Heart left ventricle (tissue), 16 donors: ENCODE measurements at regions of chr1 and their contacts with region 1.

Region 1: GRCh38 chr1:184036517-184036949 is 995 bp downstream of the COLGALT2 start:
- DNase-seq: peak; percentile 33 to 77 (median 45)
- ATAC-seq: peak; percentile 71 to 84 (median 80)
- H3K4me3 ChIP-seq: peak overlapping the region; percentile 55 to 91 (median 68)
- H3K27ac ChIP-seq: peak overlapping the region; percentile 44 to 90 (median 79)
- H3K4me1 ChIP-seq: peaks cover 0 to 18% (median 0%) of the 10 kb centered on the region in 12 donors
- H3K27me3 ChIP-seq: peaks cover 0 to 19% (median 0%) of the 10 kb centered on the region in 9 donors
- CTCF ChIP-seq: no peak
- POLR2A ChIP-seq: peak in 1 of 2 donors; percentile 25

Region 2: GRCh38 chr1:183932412-183932811 is 104.1 kb before region 1 on chr1:
- intact Hi-C with region 1: loop called in 5 of 10 experiments (anchors 5 to 10 kb)
- DNase-seq: peak; percentile 83 to 94 (median 91)
- ATAC-seq: peak; percentile 77 to 91 (median 88)
- H3K4me3 ChIP-seq: peak overlapping the region in 4 of 12 donors; percentile 3 to 19 (median 12)
- H3K27ac ChIP-seq: peak overlapping the region in 9 of 12 donors; percentile 26 to 73 (median 57)
- H3K4me1 ChIP-seq: peaks cover 0 to 30% (median 11%) of the 10 kb centered on the region in 12 donors
- H3K27me3 ChIP-seq: no peaks in the 10 kb centered on the region
- CTCF ChIP-seq: no peak
- POLR2A ChIP-seq: no peak

Region 3: DNA sequence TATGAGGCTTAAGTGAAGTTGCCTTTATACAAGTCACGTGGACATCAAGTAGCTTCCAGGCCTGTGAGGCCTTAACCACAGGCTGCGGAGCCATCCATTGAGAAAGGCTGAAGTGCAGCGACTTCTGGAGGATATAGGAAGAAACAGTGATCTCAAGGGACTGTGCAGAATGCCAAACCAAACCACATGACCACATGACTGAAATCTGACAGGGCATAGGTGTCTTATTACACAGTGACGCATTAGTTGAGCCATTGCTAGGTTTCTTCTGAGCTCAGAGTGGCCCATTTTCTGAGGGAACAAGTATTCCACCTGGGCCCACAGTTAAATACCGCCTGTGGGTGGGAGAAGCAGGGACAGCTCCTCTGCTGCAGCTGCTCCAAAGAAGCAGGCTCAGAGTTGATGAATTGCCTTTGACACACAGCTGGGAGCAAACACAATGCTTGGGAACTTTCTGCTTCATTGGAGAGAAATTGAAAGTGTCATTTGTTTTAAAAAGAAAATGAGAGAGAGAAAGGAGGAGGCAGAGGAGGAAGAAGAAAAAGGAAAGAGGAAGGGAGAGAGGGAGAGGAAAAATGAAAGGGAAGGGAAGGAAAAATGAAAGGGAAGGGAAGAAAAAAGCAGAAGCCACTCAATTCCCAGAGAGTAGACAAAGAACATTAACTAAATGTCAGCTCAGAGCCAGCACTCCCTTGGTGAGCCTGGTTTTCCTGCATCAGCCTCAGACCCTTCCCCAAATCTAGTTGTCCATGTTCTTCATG is 93.4 kb before region 1 on chr1:
- intact Hi-C with region 1: loop called in 5 of 10 experiments (anchors 5 to 10 kb)
- DNase-seq: peak in 1 of 5 donors; percentile 43
- ATAC-seq: peak in 3 of 4 donors; percentile 63 to 70 (median 65)
- H3K4me3 ChIP-seq: no peak overlapping the region
- H3K27ac ChIP-seq: peak overlapping the region in 5 of 12 donors; percentile 9 to 49 (median 32)
- H3K4me1 ChIP-seq: peaks cover 0 to 22% (median 0%) of the 10 kb centered on the region in 12 donors
- H3K27me3 ChIP-seq: no peaks in the 10 kb centered on the region
- CTCF ChIP-seq: no peak
- POLR2A ChIP-seq: no peak

Region 4: GRCh38 chr1:183989078-183989577 is 47.4 kb before region 1 on chr1:
- intact Hi-C with region 1: loop called in 1 of 10 experiments (anchors 5 kb)
- DNase-seq: peak in 4 of 5 donors; percentile 39 to 63 (median 48)
- ATAC-seq: peak; percentile 49 to 87 (median 81)
- H3K4me3 ChIP-seq: no peak overlapping the region
- H3K27ac ChIP-seq: peak overlapping the region in 5 of 12 donors; percentile 0 to 61 (median 38)
- H3K4me1 ChIP-seq: peaks cover 0 to 49% (median 20%) of the 10 kb centered on the region in 12 donors
- H3K27me3 ChIP-seq: no peaks in the 10 kb centered on the region
- CTCF ChIP-seq: no peak
- POLR2A ChIP-seq: no peak

Region 5: DNA sequence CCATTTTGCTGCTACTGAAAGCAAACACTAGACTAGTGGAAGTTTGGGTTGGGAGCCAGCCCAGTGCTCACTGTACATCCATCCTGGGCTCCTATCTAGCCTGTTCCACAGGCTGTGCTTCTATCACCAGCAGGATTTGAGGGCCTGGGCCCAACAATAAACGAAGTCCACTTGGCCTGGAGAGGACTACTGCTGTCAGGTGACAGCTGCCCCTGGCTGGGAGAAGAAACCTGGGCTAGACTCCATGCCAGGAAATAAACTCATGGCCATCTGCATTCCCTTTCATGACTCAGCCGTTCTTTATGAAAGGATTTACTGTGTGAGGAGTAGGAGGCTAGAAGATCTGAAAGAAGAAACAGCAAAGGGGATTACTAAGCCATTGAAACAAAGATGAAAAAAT is 34.5 kb before region 1 on chr1:
- intact Hi-C with region 1: no loop called
- DNase-seq: peak in 4 of 5 donors; percentile 47 to 58 (median 49)
- ATAC-seq: peak; percentile 78 to 94 (median 87)
- H3K4me3 ChIP-seq: no peak overlapping the region
- H3K27ac ChIP-seq: peak overlapping the region in 9 of 12 donors; percentile 8 to 61 (median 29)
- H3K4me1 ChIP-seq: peaks cover 0 to 16% (median 8%) of the 10 kb centered on the region in 12 donors
- H3K27me3 ChIP-seq: no peaks in the 10 kb centered on the region
- CTCF ChIP-seq: no peak
- POLR2A ChIP-seq: no peak

Region 6: DNA sequence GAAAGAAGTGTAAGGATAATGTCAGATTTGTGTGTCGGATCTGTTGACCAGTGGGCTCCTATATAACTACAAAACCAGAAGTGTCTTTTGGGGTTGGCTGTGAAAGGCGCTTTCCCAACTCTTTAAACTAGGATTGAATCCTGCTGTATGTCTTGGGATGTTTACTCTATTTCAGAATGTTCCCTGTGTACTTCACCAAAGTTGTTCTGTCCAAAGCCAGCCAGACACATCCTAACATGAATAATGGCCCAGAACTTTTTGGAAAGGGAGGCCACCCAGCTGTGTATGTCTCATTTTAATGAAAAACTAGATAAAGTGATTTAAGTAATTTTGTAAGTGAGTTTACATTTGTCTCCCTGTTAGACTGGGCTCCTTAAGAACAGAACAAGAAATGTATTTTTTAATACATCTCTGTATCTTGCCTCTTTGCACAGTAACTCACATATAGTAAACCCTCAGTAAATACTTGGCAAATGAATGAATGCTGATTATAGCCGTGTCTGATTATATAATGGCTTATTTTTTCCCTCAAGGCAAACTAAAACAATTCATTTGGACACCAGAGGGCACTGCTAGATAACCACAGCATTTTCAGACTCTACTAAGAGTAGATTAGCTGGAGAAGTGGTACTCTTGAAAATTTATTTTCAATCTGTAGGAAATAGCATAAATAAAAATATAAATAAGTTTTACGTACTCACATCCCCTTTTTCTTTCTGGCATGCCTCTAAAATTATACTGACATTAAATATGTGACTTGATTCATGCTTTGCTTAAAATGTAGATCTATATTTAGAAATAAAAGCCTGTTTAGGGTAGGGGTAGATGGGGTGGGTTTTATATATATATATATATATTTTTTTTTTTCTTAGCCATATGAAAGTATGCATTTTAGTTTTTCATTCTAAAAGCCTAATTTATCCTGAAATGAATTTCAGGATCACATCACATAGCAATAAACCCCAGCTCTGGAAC is 38.8 kb after region 1 on chr1:
- intact Hi-C with region 1: no loop called
- DNase-seq: peak in 2 of 5 donors; percentile 41 to 44
- ATAC-seq: peak; percentile 68 to 89 (median 81)
- H3K4me3 ChIP-seq: no peak overlapping the region
- H3K27ac ChIP-seq: peak overlapping the region; percentile 4 to 69 (median 55)
- H3K4me1 ChIP-seq: peaks cover 0 to 40% (median 9%) of the 10 kb centered on the region in 12 donors
- H3K27me3 ChIP-seq: no peaks in the 10 kb centered on the region
- CTCF ChIP-seq: peak; percentile 66 to 87 (median 80)
- POLR2A ChIP-seq: no peak